ENCODE measurements at regions of chr4 and their contacts with region 1.

Region 1: GRCh38 chr4:155758481-155759404 is at the start of gene GUCY1B1:
- DNase-seq: peak; percentile 96

Region 2: DNA sequence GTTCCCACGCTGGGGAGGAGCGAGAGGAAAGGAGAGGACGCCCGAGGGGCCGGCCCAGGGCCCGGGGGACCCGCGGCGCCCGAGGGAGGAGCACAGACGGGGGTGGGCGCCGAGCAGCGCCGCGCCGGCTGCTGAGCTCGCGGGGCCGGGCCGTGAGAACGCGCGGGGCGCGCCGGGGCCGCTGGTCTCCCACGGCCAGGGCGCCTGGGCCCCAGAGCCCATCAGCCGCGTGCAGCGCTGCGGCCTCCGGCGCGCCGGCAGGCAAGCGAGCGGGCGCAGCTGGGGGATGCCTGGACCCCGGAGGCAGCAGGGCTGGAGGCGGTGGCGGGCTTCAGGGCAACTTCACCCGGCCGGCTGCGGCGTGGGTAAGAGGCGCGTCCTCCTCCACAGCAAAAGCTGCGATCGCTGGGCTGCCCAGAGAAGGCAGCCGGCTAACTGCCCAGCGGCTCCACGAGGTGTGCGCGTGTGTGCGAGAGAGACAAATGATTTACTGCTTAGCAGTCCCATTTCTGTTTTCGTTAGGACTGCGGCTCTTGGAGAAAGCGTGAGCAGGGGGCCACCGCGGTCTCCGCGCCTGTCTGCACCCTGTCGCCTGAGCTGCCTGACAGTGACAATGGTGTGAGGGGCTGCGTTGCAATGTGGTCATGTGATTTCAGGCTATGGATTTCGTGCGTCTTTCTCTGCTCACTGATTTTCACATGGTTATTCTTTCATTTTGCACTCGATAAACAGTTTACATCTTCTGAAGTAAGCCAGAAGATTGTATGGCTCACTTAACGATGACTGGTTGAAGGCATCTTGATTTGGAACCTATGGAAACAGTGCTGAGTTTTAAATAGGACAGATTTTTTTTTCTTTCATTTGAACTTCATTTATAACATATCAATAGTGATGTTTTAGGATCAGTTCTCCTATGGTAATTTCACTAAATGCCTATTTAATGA is 90.9 kb before region 1 on chr4:
- CTCF ChIA-PET with region 1: no interaction called
- POLR2A ChIA-PET with region 1: interaction called, 11 read pairs
- DNase-seq: peak; percentile 64

Region 3: DNA sequence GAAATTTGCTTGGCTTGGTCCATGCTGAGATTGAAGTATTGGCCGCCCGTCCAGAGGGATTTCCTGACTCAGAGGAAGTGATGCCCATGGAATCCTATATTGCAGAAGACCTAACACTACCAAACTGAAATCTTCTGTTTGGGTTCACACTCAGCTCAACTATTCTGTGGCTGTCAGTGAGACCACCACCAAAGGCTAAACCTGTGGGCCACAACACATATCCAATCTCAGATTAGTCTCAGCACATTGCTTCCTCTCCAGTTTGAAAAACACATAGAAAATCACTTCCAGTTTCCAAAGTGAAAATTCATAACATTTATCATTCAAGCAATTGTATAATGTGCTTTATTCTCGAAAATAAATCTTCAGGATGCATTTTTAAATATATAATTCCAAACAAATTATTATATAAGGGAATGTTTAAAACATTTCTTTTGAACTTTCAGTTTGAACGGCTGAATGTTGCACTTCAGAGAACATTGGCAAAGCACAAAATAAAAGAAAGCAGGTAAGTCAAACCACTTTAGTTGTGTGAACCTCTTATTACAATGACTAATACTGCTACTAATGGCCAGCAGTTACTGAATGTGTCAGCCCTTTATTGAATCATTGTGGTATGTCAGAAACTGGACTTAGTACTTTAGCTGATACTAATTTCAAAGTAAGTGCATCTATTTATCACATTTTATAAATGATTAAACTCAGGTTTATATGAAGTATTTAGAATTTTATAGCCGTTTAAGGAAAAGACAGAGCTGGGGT is 55.1 kb before region 1 on chr4:
- CTCF ChIA-PET with region 1: no interaction called
- POLR2A ChIA-PET with region 1: no interaction called
- DNase-seq: no peak

Region 4: DNA sequence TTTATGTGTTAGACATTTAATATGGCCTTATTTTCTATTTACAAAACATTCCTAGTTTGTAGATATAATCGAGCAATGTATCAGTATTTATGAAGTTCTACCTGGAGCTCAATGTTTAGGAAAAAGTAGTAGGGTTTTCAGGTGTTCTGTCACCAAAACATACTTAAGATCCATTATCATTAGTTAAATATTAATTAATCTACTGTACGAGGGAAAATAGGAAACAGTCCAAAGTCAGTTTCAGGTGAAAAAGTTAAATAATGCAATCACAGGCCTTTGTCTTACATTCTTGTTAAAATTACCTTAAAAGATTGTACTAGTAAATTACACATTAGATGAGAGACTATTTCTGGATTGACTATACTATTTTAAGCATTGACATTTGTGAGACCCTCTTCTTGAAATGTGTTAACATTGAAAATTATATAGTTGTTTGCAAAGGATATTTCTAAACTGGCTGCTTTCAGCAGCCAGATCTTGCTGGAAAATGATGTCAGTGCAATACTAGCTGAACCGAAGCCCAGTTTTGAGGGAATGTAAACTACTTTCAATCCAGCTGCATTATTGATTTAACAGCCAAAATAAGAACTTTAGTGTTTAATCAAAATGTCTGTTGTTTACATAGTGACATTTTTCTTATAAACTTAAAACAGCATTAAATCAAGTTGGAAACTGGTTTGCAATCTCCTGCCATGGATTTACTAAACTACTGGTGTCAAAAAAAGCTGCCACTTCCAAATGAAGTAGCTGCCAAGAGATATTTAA is 19.4 kb after region 1 on chr4:
- CTCF ChIA-PET with region 1: no interaction called
- POLR2A ChIA-PET with region 1: no interaction called
- DNase-seq: no peak

Region 5: DNA sequence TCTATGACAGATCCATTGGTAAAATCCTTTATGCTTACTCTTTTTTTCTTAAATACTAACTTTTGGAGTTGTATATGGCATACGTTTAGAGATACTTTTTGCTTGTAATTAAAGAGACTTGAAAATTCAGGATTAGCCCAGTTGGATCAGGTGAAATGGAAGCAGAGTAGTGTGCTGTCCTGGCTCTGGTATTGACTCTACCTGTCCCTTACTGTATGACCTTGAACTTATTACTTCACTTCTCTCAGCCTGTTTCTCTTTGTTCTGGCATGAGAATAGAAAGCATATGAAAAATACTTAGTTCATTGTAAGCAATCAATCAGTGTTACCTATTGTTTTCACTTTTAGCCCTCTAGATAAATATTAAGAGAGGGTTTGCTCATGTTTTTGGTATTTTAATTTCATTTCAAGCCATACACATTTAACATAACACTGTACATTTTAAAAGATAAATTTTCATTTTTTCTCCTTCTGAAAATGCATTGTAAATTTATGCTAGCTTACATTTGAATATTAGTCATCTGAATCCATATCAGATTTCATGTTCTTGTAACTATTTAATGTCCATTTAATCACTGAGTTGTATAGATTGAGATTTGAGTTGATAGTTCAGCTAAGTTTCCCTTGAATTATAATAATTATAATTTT is 36.0 kb after region 1 on chr4:
- CTCF ChIA-PET with region 1: no interaction called
- POLR2A ChIA-PET with region 1: no interaction called
- DNase-seq: no peak